ENCODE measurements at regions of chr3 and their contacts with region 1.

Region 1: GRCh38 chr3:19543212-19543841 is 390.7 kb downstream of the EFHB start:
- DNase-seq: peak; percentile 55
- H3K4me3 Mint-ChIP-seq: no peak overlapping the region
- H3K27ac Mint-ChIP-seq: no peak overlapping the region
- H3K4me1 Mint-ChIP-seq: no peaks in the 10 kb centered on the region
- H3K27me3 Mint-ChIP-seq: peaks cover 35% of the 10 kb centered on the region
- CTCF ChIP-seq: peak; percentile 64

Region 2: DNA sequence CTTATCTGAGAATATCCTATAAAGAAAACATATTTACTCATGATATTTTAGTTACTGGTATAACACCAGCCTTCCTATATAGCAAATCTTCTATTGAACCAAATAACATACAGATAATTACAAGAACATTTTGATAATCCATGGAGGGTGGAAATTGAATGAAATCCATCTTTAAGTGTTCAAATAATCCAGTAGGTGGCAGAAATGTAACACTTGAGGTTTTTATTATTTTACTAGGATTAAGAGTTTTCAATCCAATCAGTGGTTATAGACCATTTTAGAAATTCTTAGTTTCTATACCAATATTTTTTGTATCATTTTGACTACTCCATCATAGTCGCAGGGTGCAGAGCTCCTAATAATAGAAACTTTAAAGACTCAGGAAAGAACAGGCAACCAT is 496.9 kb before region 1 on chr3:
- CTCF ChIA-PET with region 1: interaction called, 4 read pairs
- POLR2A ChIA-PET with region 1: no interaction called
- intact Hi-C with region 1: loop called (anchors 5 kb)
- DNase-seq: peak; percentile 13
- H3K4me3 Mint-ChIP-seq: no peak overlapping the region
- H3K27ac Mint-ChIP-seq: no peak overlapping the region
- H3K4me1 Mint-ChIP-seq: no peaks in the 10 kb centered on the region
- H3K27me3 Mint-ChIP-seq: peaks cover 7% of the 10 kb centered on the region
- CTCF ChIP-seq: peak; percentile 21

Region 3: DNA sequence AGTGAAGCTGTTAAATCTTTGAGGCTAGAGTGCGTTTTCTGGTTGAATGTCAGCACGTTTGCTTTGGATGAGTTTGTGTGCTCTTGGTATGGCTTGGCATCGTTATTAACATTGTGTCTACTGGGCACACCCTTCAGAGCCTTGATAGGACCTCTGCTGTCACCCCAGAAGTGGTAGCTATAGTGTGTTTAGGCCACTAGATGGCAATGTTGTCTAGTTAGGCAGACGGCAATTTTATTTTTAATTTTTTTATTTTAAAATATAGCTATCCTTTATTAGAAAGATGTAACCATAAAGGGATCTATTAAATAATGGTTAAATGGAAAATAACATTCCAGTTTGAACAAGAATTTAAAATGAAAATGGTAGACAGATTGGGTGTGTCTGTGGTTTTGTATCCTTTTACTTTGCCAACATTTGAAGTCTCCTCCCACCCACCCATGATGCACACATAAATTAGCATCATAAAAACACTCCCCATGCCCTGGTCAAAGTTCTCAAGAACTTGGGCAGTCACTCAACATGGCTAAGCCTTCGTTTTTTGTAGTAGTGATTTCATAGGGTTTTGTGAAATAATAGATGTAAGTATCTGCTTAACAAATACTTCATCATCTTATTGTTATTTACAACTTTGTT is 194.3 kb before region 1 on chr3:
- CTCF ChIA-PET with region 1: interaction called, 21 read pairs
- POLR2A ChIA-PET with region 1: interaction called, 4 read pairs
- intact Hi-C with region 1: loop called (anchors 1 kb)
- DNase-seq: peak; percentile 41
- H3K4me3 Mint-ChIP-seq: no peak overlapping the region
- H3K27ac Mint-ChIP-seq: no peak overlapping the region
- H3K4me1 Mint-ChIP-seq: no peaks in the 10 kb centered on the region
- H3K27me3 Mint-ChIP-seq: peaks cover 65% of the 10 kb centered on the region
- CTCF ChIP-seq: peak; percentile 82

Measured in MCF 10A (cell line).